Left lung (tissue), 14 donors: ENCODE measurements at regions of chr17 and their contacts with region 1.

Region 1: DNA sequence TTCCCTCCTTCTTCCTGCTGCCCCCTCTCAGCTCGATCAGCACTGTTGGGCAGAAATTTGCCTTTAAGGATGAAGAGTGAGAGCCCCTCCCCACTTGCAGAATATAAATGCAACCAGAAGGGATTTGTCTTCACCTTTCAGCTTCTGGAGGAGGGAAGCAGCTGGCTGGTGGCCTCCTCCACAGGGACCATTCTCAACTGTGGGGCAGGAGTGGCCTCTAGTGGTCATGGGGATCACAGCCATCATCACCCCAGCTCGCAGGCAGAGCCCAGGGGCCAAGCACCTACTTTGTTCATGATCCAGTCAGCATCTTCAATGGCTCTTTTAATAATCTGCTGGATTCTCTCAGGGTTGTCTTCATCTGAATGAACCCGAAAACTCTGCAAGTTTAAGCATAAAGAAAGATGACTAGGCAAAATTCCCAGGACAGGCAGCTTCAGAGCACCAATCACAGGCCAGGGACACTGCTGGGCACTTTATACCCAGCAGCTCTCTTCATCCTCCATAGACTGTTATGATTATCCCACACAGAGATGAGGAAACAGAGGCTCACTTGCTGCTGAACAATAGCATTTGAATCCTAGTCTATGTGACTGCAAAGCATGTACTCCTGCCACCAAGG is 13.1 kb downstream of the LYRM9 start:
- DNase-seq: peak; percentile 36 to 79 (median 68)
- ATAC-seq: peak; percentile 98
- H3K4me3 ChIP-seq: no peak overlapping the region
- H3K27ac ChIP-seq: no peak overlapping the region
- H3K4me1 ChIP-seq: no peaks in the 10 kb centered on the region
- H3K27me3 ChIP-seq: no peaks in the 10 kb centered on the region
- CTCF ChIP-seq: peak; percentile 70 to 85

Region 2: GRCh38 chr17:27666831-27667560 is 213.1 kb before region 1 on chr17:
- intact Hi-C with region 1: loop called in 1 of 2 experiments (anchors 10 kb)
- DNase-seq: no peak
- ATAC-seq: no peak
- H3K4me3 ChIP-seq: no peak overlapping the region
- H3K27ac ChIP-seq: no peak overlapping the region
- H3K4me1 ChIP-seq: no peaks in the 10 kb centered on the region
- H3K27me3 ChIP-seq: no peaks in the 10 kb centered on the region
- CTCF ChIP-seq: no peak

Region 3: DNA sequence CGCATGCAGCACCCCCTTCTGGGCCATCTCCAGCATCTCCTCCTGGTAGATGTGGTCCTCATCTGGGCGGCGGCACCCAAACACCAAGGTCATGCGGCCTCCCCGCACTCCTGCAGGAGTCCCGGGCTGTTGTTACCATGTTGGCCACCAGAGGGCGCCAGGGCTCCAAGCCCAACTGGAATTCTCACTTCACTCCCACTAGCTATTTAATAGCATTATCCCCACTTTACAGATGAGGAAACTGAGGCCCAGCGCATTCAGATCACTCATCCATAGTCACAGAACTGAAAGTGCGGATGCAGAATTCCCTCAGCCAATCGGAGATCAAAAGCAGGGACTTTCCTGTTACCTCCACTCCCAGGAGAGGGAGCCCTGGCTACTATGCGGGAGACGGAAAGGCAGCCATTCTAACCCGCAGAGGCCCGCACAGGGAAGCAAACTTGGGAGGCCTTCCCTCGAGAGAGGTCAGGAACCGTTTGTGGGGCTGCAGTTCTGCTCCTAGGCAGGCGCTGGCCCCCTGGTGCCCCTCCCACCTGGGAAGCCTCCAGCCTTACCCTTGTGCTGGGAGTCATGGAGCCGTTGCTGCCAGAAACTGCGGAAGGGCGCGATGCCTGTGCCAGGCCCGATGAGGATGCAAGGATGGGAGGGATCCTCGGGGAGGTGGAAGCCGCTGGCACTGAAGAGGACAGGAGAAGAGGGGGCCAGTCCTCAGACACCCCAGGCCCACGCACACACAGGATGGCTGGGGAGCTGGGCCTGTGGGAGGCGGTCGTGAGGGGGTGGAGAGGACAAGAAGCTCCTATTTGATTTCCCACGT is 119.8 kb before region 1 on chr17:
- intact Hi-C with region 1: loop called in 1 of 2 experiments (anchors 5 kb)
- DNase-seq: peak in 3 of 4 donors; percentile 34 to 93 (median 65)
- ATAC-seq: peak; percentile 77
- H3K4me3 ChIP-seq: no peak overlapping the region
- H3K27ac ChIP-seq: no peak overlapping the region
- H3K4me1 ChIP-seq: peaks cover 0 to 4% of the 10 kb centered on the region in 2 donors
- H3K27me3 ChIP-seq: no peaks in the 10 kb centered on the region
- CTCF ChIP-seq: peak; percentile 90 to 96

Region 4: DNA sequence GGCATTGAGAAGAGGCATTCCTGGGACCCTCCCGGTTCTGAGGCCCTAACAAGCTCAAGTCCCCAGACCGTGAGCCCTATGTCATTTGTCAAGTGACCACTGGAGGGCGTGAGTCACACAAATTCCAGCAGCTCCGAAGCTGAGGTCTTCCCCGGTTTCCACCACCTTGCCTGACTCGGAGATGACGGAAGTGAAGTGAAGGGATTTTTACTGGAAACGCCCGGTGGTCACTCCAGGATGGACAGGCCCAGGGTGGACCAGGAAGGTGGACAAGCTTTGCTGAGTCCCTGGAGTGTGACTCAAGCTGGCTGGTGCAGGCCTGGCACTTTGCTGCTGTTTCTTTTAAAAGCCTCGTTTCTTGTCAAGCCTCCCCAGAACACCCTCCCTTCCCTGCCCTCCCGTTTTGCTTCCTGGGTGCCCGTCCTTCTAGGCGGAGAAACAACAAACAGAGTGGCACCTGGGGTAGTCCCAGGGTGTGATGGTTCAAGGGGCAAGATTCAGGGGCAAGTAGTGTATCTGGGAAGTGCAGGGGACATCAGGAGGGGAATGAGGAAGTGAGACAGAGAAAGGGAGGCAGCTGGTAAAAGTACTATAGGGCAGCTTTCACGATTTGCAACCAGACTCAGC is 74.5 kb before region 1 on chr17:
- intact Hi-C with region 1: loop called in 1 of 2 experiments (anchors 5 kb)
- DNase-seq: peak; percentile 72 to 89 (median 82)
- ATAC-seq: peak; percentile 99
- H3K4me3 ChIP-seq: peak overlapping the region in 1 of 2 donors; percentile 25
- H3K27ac ChIP-seq: peak overlapping the region in 1 of 2 donors; percentile 43
- H3K4me1 ChIP-seq: peaks cover 5 to 17% of the 10 kb centered on the region in 2 donors
- H3K27me3 ChIP-seq: no peaks in the 10 kb centered on the region
- CTCF ChIP-seq: peak; percentile 74 to 83

Region 5: GRCh38 chr17:27818401-27819105 is 61.5 kb before region 1 on chr17:
- intact Hi-C with region 1: no loop called
- DNase-seq: no peak
- ATAC-seq: peak; percentile 13
- H3K4me3 ChIP-seq: no peak overlapping the region
- H3K27ac ChIP-seq: peak overlapping the region in 1 of 2 donors; percentile 1
- H3K4me1 ChIP-seq: no peaks in the 10 kb centered on the region
- H3K27me3 ChIP-seq: no peaks in the 10 kb centered on the region
- CTCF ChIP-seq: no peak